Activated naive CD4-positive, alpha-beta T cell treated with anti-CD3 and anti-CD28 coated beads, Interleukin-2, amount 10 ng/mL, durations not matched to agents 7 days and 5 days (primary cell): ENCODE measurements at regions of chr10 and their contacts with region 1.

Region 1: GRCh38 chr10:93376372-93377293 is 105.5 kb downstream of the MYOF start:
- DNase-seq: peak; percentile 48
- H3K4me3 Mint-ChIP-seq: no peak overlapping the region
- H3K27ac Mint-ChIP-seq: peak overlapping the region; percentile 46
- H3K4me1 Mint-ChIP-seq: peaks cover 20% of the 10 kb centered on the region
- H3K27me3 Mint-ChIP-seq: no peaks in the 10 kb centered on the region

Region 2: DNA sequence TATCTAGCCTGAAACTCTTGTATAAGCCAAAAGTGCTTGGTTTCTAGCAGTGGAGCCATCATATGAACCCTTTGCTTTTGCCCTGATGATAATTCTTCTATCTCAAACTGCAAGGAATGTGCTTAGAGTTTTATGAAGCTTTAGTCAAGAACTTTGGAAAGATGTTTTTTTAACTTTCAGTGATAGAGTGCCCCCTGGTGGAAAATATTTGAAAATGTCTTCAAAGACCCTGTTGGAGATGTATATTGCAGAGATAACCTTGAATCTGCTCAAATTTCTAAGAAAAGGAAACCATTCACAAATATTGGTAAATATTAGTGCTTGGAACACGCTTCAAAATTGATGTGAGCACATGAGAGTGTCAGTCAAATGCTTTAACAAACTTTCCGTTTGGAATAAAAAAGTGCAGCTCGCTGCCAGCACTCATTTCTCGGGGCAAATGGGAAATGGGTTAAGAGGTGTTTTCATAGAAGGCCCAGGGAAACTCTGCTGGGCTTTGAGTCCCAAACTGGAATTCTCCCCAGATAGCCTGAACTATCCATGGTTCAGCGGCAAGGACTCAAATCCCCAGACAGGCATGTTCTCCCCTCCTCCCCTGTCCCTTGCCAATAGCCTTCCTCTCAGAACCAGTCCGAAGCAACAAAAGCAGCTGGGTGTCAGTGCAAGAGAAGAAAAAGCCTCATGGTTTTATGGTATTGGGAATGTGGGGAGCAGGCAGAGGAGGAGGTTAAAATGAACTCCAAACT is 23.8 kb before region 1 on chr10:
- CTCF ChIA-PET with region 1: interaction called, 10 read pairs
- DNase-seq: no peak
- H3K4me3 Mint-ChIP-seq: no peak overlapping the region
- H3K27ac Mint-ChIP-seq: no peak overlapping the region
- H3K4me1 Mint-ChIP-seq: peaks cover 2% of the 10 kb centered on the region
- H3K27me3 Mint-ChIP-seq: peaks cover 3% of the 10 kb centered on the region

Region 3: GRCh38 chr10:93413252-93413689 is 36.6 kb after region 1 on chr10:
- CTCF ChIA-PET with region 1: interaction called, 14 read pairs
- DNase-seq: peak; percentile 67
- H3K4me3 Mint-ChIP-seq: peak overlapping the region; percentile 22
- H3K27ac Mint-ChIP-seq: peak overlapping the region; percentile 97
- H3K4me1 Mint-ChIP-seq: peaks cover 59% of the 10 kb centered on the region
- H3K27me3 Mint-ChIP-seq: no peaks in the 10 kb centered on the region

Region 4: GRCh38 chr10:93471110-93471651 is 94.5 kb after region 1 on chr10:
- CTCF ChIA-PET with region 1: interaction called, 42 read pairs
- DNase-seq: no peak
- H3K4me3 Mint-ChIP-seq: no peak overlapping the region
- H3K27ac Mint-ChIP-seq: no peak overlapping the region
- H3K4me1 Mint-ChIP-seq: no peaks in the 10 kb centered on the region
- H3K27me3 Mint-ChIP-seq: no peaks in the 10 kb centered on the region

Region 5: GRCh38 chr10:93496322-93497041 is 119.8 kb after region 1 on chr10 and contains the start of gene CEP55:
- CTCF ChIA-PET with region 1: interaction called, 533 read pairs
- DNase-seq: peak; percentile 97
- H3K4me3 Mint-ChIP-seq: peak within 1 kb of the TSS; percentile 83
- H3K27ac Mint-ChIP-seq: peak within 1 kb of the TSS; percentile 92
- H3K4me1 Mint-ChIP-seq: peaks cover 45% of the 10 kb centered on the region
- H3K27me3 Mint-ChIP-seq: peaks cover 4% of the 10 kb centered on the region